PC-9 (cell line): ENCODE measurements at regions of chr1 and their contacts with region 1.

Region 1: GRCh38 chr1:229227298-229227919 is 43.5 kb upstream of the RAB4A start:
- DNase-seq: peak in 1 of 2 experiments; percentile 69
- H3K4me3 ChIP-seq: no peak overlapping the region
- H3K27ac ChIP-seq: no peak overlapping the region
- H3K4me1 ChIP-seq: peaks cover 47% of the 10 kb centered on the region
- H3K27me3 ChIP-seq: peaks cover 27% of the 10 kb centered on the region
- CTCF ChIP-seq: peak; percentile 95

Region 2: DNA sequence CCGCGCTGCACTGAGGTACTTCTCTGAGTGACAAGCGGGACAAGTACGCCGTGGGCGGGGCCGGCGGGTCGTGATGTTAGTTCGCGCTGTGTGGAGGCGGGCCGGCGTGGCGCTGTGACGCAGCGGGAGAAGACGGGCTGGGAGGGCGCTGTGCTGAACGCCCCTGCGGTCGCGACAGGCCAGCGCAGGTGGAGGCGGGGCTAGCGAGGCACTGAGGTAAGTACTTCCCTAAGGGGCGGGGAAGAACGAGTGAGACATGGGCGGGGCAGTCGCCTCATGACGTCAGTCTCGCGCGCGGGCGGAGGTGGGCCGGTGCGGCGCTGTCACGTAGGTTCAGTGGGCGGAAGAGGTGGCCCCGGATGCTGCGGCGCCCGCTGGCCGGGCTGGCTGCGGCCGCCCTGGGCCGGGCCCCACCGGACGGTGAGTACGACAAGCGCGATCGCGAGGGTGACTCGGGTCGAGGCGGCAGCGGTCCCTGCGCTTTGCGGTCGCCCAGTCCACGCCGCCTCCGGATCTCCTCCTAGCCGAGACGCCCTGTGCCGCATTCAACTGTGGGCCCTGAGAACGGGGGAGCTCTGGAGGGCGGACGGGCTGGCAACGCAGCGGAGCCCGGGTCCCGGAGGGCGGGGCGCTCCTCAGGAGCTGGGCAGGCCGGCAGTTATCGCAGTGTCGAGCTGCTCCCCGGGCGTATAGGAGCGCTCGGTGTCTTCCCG is 1087.3 kb before region 1 on chr1 and contains the start of gene GUK1:
- CTCF ChIA-PET with region 1: no interaction called
- POLR2A ChIA-PET with region 1: no interaction called
- intact Hi-C with region 1: loop called (anchors 10 kb)
- DNase-seq: peak; percentile 98 to 100
- H3K4me3 ChIP-seq: peak within 1 kb of the TSS; percentile 90
- H3K27ac ChIP-seq: peak within 1 kb of the TSS; percentile 64
- H3K4me1 ChIP-seq: peaks cover 9% of the 10 kb centered on the region
- H3K27me3 ChIP-seq: no peaks in the 10 kb centered on the region
- CTCF ChIP-seq: no peak; the same call in 1 of the 2 replicates
- total RNA-seq, gene GUK1: 239 and 278 TPM in 2 replicates

Region 3: DNA sequence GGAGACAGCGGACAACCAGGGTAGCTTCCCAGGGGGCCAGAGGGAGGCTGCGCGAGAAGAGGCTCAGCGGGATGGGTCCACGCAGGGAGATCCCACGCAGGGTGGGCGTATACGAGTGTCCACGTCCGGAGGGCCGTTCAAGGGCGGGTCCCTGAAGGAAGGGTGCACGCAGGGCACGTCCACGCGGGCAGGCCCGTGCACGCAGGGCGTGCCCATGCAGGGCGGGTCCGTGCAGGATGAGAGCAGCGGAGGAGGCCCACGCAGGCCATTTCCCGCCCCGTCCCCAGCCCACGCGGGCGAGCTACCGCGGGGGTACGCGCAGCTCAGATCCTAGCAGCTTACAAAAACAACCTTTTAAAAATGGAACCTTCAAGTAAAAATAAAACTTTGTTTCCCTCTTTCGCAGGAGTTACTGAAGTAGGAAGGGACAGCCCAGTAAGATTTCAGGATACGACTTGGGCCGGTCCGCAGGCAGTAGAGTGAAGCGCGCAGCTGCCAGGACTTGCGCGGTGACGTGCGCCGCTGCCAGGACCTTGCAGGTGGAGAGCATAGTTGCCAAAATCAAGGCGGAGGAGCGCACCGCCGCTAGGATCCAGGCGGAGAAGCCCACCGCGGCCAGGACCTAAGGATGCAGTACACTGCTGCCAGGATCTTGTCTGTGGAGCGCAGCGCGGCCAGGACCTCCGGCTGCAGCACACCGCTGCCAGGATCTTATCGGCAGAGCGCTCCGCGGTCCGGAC is 740.6 kb before region 1 on chr1:
- CTCF ChIA-PET with region 1: no interaction called
- POLR2A ChIA-PET with region 1: interaction called, 11 read pairs
- intact Hi-C with region 1: no loop called
- DNase-seq: peak; percentile 80 to 94
- H3K4me3 ChIP-seq: peak overlapping the region; percentile 96
- H3K27ac ChIP-seq: peak overlapping the region; percentile 76
- H3K4me1 ChIP-seq: peaks cover 34% of the 10 kb centered on the region
- H3K27me3 ChIP-seq: no peaks in the 10 kb centered on the region
- CTCF ChIP-seq: no peak

Region 4: DNA sequence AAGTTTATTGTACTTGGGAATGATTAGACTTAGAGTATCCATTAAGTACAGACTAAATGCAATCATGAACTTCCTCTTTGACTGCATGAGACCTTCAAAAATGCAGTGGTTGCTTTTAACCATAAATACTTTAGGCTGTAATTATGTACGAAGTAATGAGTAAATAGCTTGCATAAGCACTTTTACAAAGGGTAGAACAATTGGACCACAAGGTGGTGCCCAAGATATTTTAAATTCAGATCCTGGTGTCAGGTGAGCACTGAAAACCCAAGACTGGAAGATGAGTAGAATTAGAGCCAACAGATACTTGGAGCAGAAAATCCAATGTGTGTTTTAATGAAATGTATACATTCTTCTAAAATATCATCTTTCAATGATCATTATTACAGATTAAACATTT is 535.5 kb before region 1 on chr1:
- CTCF ChIA-PET with region 1: no interaction called
- POLR2A ChIA-PET with region 1: no interaction called
- intact Hi-C with region 1: loop called (anchors 10 kb)
- DNase-seq: peak; percentile 11 to 53
- H3K4me3 ChIP-seq: no peak overlapping the region
- H3K27ac ChIP-seq: no peak overlapping the region
- H3K4me1 ChIP-seq: no peaks in the 10 kb centered on the region
- H3K27me3 ChIP-seq: peaks cover 29% of the 10 kb centered on the region
- CTCF ChIP-seq: peak; percentile 60

Region 5: DNA sequence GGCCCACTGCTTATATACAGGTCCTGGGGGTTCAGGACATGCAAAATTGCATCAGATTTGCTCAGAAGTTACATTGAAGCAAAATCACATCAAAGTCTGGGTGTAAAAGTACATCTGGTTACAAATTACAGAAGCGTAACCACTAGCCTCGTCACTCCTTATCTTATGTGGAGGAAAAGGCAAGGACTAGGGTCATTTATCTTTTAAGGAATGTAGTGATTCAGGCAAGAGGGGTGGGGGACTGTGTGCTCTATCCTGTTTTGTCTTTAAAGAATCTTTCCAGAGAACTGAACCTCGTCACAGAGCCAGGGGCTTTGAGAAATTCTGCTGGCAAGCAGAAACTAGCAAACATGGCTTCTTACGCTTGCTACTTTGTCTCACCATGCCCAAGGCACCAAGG is 17.6 kb before region 1 on chr1:
- CTCF ChIA-PET with region 1: no interaction called
- POLR2A ChIA-PET with region 1: no interaction called
- intact Hi-C with region 1: no loop called
- DNase-seq: no peak
- H3K4me3 ChIP-seq: no peak overlapping the region
- H3K27ac ChIP-seq: no peak overlapping the region
- H3K4me1 ChIP-seq: no peaks in the 10 kb centered on the region
- H3K27me3 ChIP-seq: peaks cover 53% of the 10 kb centered on the region
- CTCF ChIP-seq: no peak

Region 6: GRCh38 chr1:229258031-229258756 is 30.8 kb after region 1 on chr1:
- CTCF ChIA-PET with region 1: interaction called, 3 read pairs
- POLR2A ChIA-PET with region 1: interaction called, 4 read pairs
- intact Hi-C with region 1: loop called (anchors 1 kb)
- DNase-seq: peak; percentile 51 to 55
- H3K4me3 ChIP-seq: no peak overlapping the region
- H3K27ac ChIP-seq: no peak overlapping the region
- H3K4me1 ChIP-seq: 0 out of 2 replicates have a peak, but pooled peaks cover 4% of the 10 kb centered on the region
- H3K27me3 ChIP-seq: no peaks in the 10 kb centered on the region
- CTCF ChIP-seq: peak; percentile 85